GM18951 (cell line): ENCODE measurements at regions of chr18 and their contacts with region 1.

Region 1: GRCh38 chr18:46950064-46950656 is 32.8 kb downstream of the KATNAL2 start:
- POLR2A ChIP-seq: no peak

Region 2: DNA sequence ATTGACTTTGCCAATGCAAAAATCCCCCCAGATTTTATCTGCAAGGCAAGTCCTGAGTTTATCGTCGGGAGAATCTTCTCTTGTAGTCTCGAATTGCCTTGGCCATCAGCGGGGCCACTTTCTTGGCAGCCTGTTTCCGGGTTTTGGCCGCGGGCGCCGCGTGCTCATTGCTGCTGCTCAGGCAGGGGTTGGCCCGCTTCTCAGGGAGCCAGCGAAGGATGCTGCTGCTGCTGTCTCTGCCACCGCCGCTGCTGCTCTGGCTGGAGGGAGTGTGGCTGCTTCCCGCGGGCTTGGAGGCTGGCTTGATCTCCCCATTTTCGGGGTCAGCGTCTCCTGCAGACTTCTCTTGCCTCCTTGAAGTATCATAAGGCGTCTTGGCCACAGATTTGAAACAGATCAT is 82.8 kb after region 1 on chr18:
- in situ Hi-C with region 1: loop called (anchors 10 kb)
- POLR2A ChIP-seq: no peak

Region 3: DNA sequence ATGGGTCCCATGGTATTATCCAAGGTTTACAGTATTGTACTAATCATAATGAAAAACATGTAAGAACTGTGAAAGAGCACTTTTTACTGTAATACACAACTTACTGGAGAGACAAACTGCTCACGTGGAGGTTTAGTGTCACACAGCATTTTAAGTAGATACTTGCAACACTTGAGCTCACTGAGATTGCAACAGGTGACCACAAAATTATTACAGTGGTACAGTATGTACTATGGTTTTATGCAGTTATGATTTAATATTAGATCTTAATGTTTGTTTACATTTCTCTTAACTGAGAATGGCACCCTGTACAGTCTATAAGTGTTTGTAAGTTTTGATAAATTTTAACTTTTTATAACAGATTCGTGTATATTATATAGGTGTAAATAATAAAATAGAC is 419.9 kb after region 1 on chr18:
- in situ Hi-C with region 1: no loop called
- POLR2A ChIP-seq: no peak